ENCODE measurements at regions of chr4 and their contacts with region 1.

Region 1: DNA sequence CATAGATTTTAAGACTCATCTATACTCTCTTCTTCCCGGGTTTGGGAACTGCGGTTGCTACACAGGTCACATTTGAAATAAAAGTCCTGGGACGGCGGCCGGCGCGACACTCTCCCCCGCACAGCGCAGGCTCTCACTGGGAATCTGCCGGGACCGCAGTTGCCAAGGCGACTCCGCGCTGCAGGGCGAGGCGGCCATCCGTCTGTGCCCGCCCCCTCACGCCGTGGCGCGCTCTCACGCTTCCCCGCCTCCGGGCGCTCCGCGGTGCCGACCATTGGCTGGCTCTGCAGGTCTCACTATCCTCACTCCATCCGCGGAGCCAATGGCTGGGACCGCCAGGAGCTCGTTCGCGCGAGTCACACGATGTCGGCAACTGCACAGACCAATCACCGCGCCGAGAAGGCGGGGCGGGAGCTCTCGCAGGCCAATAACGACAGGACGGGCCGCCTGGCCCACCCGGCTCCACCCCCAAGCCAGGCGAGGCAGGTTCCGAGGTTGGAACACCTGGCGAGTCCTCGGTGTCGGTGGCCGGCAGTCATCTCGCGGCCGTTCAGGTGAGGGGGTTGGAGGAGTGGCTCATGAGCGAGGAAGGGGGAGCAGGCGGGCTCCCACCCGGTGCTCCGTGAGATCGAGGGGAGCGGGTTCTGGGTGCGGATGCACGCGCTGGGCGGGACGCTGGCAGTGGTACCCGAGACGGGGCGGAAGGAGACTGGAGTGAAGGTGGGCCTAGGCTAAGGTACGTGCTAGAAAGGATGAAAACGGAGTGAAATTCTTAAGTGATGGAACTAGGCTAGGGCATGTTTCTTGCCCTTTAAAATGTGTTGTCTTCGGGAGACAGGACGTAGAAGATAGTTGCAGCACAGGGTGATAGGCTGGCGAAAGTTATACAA is at the start of gene MSMO1:
- DNase-seq: peak; percentile 100
- total RNA-seq, gene MSMO1: 19.8 TPM

Region 2: GRCh38 chr4:165112368-165113139 is 214.9 kb before region 1 on chr4 and contains the start of gene TMEM192:
- intact Hi-C with region 1: loop called (anchors 5 kb)
- DNase-seq: peak; percentile 98
- total RNA-seq, gene TMEM192: 10.6 TPM

Region 3: DNA sequence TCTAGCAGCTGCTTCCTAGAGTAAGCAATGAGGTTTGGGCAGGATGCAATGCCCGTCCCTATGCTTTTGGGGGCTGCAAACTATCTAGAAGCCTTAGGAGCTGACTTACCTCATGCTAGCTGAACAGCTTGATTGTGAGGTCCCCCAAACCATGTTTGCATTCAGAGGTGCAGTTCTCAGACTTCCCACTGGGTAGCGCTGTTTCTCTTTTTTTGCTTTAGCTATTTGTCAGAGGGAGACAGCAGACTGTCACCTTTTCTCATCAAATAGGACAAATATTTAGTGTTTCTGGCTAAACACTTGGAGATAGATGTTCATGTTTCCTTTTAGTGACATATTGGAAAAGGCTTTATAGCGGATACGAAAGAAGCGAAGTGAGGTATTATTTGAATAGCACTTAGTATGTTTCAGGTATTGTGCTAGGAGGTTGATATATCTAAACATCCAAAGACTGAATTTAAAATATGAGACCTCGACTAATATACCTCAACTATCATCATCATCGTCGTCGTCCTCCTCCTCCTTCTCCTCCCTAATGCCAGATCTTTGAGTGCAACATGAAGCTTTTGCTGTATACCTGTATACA is 196.1 kb before region 1 on chr4:
- intact Hi-C with region 1: loop called (anchors 5 kb)
- DNase-seq: no peak

Region 4: GRCh38 chr4:165207431-165208220 is 119.8 kb before region 1 on chr4 and contains the start of gene KLHL2:
- intact Hi-C with region 1: loop called (anchors 1 kb)
- DNase-seq: peak; percentile 94
- total RNA-seq, gene KLHL2: 13.1 TPM

Measured in cardiac septum (tissue), 1 donor.